T-cell (primary cell): ENCODE measurements at regions of chr6 and their contacts with region 1.

Region 1: GRCh38 chr6:15378866-15379265 is 133.0 kb downstream of the JARID2 start:
- DNase-seq: no peak
- ATAC-seq: no peak
- H3K4me3 ChIP-seq: no peak overlapping the region
- H3K4me3 Mint-ChIP-seq: no peak overlapping the region
- H3K27ac ChIP-seq: no peak overlapping the region
- H3K27ac Mint-ChIP-seq: no peak overlapping the region
- H3K4me1 ChIP-seq: peaks cover 9% of the 10 kb centered on the region in 2 experiments
- H3K4me1 Mint-ChIP-seq: peaks cover 53 to 60% (median 58%) of the 10 kb centered on the region in 3 donors
- H3K27me3 ChIP-seq: no peaks in the 10 kb centered on the region
- H3K27me3 Mint-ChIP-seq: no peaks in the 10 kb centered on the region

Region 2: GRCh38 chr6:15363523-15364400 is 15.1 kb before region 1 on chr6:
- CTCF ChIA-PET with region 1: no interaction called
- POLR2A ChIA-PET with region 1: no interaction called
- DNase-seq: no peak
- ATAC-seq: no peak
- H3K4me3 ChIP-seq: no peak overlapping the region
- H3K4me3 Mint-ChIP-seq: no peak overlapping the region
- H3K27ac ChIP-seq: no peak overlapping the region
- H3K27ac Mint-ChIP-seq: peak overlapping the region; percentile 24 to 56
- H3K4me1 ChIP-seq: peaks cover 18% of the 10 kb centered on the region in 2 experiments
- H3K4me1 Mint-ChIP-seq: peaks cover 18 to 43% (median 36%) of the 10 kb centered on the region in 3 donors
- H3K27me3 ChIP-seq: no peaks in the 10 kb centered on the region
- H3K27me3 Mint-ChIP-seq: no peaks in the 10 kb centered on the region

Region 3: DNA sequence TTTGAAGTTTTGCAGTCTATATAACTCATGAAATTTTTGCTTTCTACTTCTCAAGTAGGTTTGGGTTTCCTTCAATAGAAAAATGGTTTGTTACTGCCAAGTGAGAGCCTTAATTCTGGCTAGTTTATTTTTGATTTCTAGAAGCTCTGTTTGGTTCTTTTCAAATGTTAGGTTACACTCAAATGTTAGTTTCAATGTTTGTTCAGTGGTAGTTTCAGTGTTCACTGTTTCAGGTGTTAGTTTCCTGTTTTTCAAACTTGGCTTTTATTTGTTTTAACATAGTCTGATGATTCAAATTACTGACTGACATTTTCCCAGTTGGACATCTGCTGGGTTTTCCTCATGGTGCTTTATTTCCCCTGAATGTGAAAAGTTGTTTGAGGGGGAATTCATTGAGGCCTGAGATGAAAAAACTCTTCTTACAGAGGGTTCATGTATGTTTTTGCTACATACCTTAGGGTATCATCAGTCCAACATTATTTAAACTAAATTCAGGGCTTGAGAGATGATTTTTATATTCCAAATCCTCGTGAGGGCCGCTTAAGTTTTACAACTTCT is 56.0 kb after region 1 on chr6:
- CTCF ChIA-PET with region 1: interaction called in 1 of 2 experiments, 4 read pairs
- POLR2A ChIA-PET with region 1: interaction called in 1 of 2 experiments, 10 read pairs
- DNase-seq: no peak
- ATAC-seq: no peak
- H3K4me3 ChIP-seq: no peak overlapping the region
- H3K4me3 Mint-ChIP-seq: peak overlapping the region in 1 of 3 donors; percentile 50
- H3K27ac ChIP-seq: peak overlapping the region; percentile 7
- H3K27ac Mint-ChIP-seq: peak overlapping the region; percentile 62 to 72
- H3K4me1 ChIP-seq: peaks cover 52 to 55% of the 10 kb centered on the region in 2 experiments
- H3K4me1 Mint-ChIP-seq: peaks cover 88 to 96% (median 94%) of the 10 kb centered on the region in 3 donors
- H3K27me3 ChIP-seq: no peaks in the 10 kb centered on the region
- H3K27me3 Mint-ChIP-seq: no peaks in the 10 kb centered on the region